ENCODE measurements at regions of chr2 and their contacts with region 1.

Region 1: GRCh38 chr2:218319813-218320365 is 27.6 kb upstream of the TMBIM1 start:
- DNase-seq: no peak
- ATAC-seq: no peak
- H3K4me3 ChIP-seq: no peak overlapping the region
- H3K27ac ChIP-seq: no peak overlapping the region
- H3K4me1 ChIP-seq: peaks cover 3 to 59% (median 20%) of the 10 kb centered on the region in 9 donors
- H3K27me3 ChIP-seq: no peaks in the 10 kb centered on the region
- CTCF ChIP-seq: no peak

Region 2: DNA sequence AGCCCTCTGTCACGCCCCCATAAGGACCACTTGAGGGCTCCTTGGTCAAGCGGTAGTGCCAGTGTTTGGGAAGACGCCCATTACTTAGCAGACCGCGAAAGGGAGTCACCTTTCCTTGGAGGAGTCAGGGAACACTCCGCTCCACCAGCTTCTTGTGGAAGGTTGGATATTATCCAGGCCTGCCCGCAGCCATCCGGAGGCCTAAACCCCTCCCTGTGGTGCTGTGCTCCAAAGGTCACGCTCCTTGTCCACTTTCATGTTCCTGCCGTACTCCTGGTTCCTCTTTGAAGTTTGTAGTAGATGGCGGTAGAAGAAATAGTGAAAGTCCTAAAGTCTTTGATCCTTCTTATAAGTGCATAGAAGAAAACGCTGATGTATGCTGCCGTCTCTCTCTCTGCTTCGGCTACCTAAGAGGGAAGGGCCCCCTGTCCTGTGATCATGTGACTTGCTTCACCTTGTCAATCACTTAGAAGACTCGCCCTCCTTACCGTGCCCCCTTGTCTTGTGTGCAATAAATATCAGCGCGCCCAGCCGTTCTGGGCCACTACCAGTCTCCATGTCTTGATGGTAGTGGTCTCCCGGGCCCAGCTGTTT is 35.1 kb after region 1 on chr2:
- intact Hi-C with region 1: loop called in 1 of 10 experiments (anchors 5 kb)
- DNase-seq: no peak
- ATAC-seq: no peak
- H3K4me3 ChIP-seq: no peak overlapping the region
- H3K27ac ChIP-seq: no peak overlapping the region
- H3K4me1 ChIP-seq: peaks cover 0 to 13% (median 0%) of the 10 kb centered on the region in 9 donors
- H3K27me3 ChIP-seq: no peaks in the 10 kb centered on the region
- CTCF ChIP-seq: no peak

Measured in heart right ventricle (tissue), 16 donors.